ENCODE measurements at regions of chr1 and their contacts with region 1.

Region 1: DNA sequence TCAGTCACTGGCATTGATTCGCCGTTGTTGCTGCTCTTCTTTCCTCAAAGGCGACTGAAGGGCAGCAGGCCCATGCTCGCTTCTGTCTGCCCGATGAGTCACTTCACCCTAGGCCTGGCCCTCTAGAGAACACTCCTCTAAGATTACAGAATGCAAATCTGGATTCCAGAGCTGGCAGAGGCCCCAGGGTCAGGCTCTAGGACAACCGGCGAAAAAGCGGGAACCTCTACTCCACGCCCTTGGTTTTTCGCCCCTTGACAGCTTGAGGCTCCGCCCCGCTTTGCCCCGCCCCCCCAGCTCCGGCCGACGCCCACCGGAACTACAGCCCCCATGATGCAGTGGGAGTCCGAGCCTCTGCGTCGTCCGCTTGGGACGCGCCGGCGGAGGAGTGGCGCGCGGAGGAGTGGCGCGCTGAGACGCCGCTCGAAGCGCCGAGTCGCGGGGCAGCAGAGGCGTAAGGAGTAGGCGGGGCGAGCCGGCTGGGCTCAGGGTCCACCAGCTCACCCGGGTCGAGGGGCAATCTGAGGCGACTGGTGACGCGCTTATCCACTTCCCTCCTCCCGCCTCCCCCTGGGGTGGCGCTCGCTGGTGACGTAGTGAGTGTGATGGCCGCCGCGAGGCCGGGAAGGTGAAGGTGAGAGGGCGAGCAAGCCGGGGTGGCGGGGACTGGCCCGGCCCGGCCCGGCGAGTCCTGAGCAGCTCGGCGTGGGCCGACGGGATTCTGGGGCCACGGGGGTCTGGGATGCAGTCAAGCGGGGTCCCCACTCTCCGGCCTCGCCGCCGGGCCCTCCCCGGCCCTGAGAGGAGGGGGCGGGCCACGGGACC is at the start of gene MFN2:
- DNase-seq: peak; percentile 98 to 99 (median 98)
- ATAC-seq: peak; percentile 95 to 96
- H3K4me3 ChIP-seq: peak within 1 kb of the TSS; percentile 78
- H3K27ac ChIP-seq: peak within 1 kb of the TSS; percentile 94
- H3K4me1 ChIP-seq: peaks cover 10% of the 10 kb centered on the region
- H3K27me3 ChIP-seq: no peaks in the 10 kb centered on the region
- total RNA-seq, gene MFN2: 386 to 449 (median 419) TPM

Region 2: DNA sequence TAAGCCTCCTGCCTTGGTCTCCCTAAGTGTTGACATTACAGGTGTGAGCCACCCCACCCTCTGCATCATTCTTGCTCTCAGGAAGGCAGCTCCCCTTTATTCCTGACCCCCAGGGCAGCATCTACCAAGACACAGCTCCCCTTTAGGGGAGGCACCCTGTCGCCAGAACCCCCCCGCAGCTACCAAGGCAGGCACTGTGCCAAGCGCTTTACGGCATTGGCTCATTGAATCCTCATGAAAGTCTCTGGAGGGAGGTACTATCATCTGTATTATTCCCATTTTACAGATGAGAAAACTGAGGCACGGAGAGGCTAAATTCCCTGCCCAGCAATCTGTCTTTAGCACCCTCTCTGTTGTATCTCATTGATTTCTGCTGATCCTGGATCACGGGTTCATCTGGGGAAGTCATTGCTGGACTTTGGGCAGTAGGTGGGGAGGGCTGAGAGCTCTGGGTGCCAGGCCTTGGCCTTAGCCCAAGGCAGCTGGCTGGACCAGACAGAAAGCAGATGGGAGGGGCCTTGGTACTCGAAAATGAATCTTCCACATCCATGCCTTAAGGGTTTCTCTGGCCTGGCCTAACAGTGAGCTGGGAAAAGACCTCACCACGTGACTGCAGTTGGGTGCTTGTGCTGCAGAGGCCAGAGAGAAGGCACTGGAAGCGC is 39.7 kb before region 1 on chr1:
- intact Hi-C with region 1: loop called in 1 of 4 experiments (anchors 5 kb)
- DNase-seq: peak in 1 of 3 donors; percentile 70
- ATAC-seq: peak; percentile 24 to 50
- H3K4me3 ChIP-seq: no peak overlapping the region
- H3K27ac ChIP-seq: no peak overlapping the region
- H3K4me1 ChIP-seq: peaks cover 3% of the 10 kb centered on the region
- H3K27me3 ChIP-seq: no peaks in the 10 kb centered on the region

Measured in right cardiac atrium (tissue), 5 donors.